ENCODE measurements at regions of chr2 and their contacts with region 1.

Region 1: GRCh38 chr2:98664327-98664726 is 55.9 kb downstream of the UNC50 start:
- DNase-seq: no peak
- ATAC-seq: peak; percentile 65
- H3K4me3 Mint-ChIP-seq: peak overlapping the region; percentile 69
- H3K27ac Mint-ChIP-seq: peak overlapping the region; percentile 97
- H3K4me1 Mint-ChIP-seq: peaks cover 55% of the 10 kb centered on the region
- H3K27me3 Mint-ChIP-seq: no peaks in the 10 kb centered on the region

Region 2: GRCh38 chr2:98691303-98691702 is 27.0 kb after region 1 on chr2:
- POLR2A ChIA-PET with region 1: interaction called, 10 read pairs
- DNase-seq: no peak
- ATAC-seq: no peak
- H3K4me3 Mint-ChIP-seq: no peak overlapping the region
- H3K27ac Mint-ChIP-seq: peak overlapping the region; percentile 36
- H3K4me1 Mint-ChIP-seq: peaks cover 49% of the 10 kb centered on the region
- H3K27me3 Mint-ChIP-seq: no peaks in the 10 kb centered on the region

Measured in activated naive CD8-positive, alpha-beta T cell treated with anti-CD3 and anti-CD28 coated beads, Interleukin-2, amount 10 ng/mL, durations not matched to agents 7 days and 5 days (primary cell).